Activated naive CD4-positive, alpha-beta T cell treated with anti-CD3 and anti-CD28 coated beads for 36 hours (primary cell): ENCODE measurements at regions of chr12 and their contacts with region 1.

Region 1: DNA sequence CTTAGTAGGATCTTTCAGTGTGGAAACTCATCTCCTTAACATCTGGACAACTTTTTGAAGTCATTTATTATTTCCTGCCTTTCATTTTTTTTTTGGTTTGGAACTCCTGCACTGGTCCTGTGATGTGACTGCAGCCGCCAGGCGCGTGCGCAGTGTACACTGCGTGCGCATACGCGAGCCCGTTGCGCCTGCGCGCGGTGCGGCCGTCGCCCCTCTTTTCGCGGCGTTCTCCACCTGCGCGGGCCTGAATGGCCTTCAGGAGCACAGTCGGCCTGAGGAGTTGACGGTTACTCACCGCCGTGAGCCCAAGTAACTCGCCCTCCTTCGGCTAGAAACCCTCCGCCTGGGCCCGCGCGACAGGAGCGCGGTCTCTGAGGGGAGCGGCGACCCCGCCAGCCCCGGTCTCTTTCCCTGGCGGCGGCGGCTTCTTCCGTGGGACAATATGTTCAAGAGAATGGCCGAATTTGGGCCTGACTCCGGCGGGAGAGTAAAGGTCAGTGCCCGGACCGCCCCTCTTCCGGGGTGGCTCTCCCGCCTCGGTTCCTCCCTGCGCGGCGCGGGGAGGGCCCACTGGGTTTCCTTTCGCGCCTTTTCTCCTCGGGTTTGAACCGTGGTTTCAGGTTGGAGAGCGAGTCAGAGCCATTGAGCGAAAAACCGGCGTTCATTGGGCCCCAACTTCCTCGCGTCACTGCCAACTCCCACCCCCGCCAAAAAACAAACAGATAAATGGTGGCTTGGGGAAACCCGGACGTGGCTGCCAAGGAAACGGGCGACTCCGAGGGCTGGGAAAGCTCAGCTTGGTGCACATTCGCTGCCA is at the start of gene YEATS4:
- DNase-seq: peak; percentile 97
- H3K4me3 Mint-ChIP-seq: peak within 1 kb of the TSS; percentile 71
- H3K27ac Mint-ChIP-seq: peak within 1 kb of the TSS; percentile 89
- H3K4me1 Mint-ChIP-seq: peaks cover 33% of the 10 kb centered on the region
- H3K27me3 Mint-ChIP-seq: no peaks in the 10 kb centered on the region
- total RNA-seq, gene YEATS4: 52.3 to 53.5 TPM

Region 2: GRCh38 chr12:69290545-69291277 is 69.0 kb before region 1 on chr12:
- CTCF ChIA-PET with region 1: interaction called, 18 read pairs
- intact Hi-C with region 1: loop called (anchors 1 kb)
- DNase-seq: peak; percentile 95
- H3K4me3 Mint-ChIP-seq: peak overlapping the region; percentile 5
- H3K27ac Mint-ChIP-seq: no peak overlapping the region
- H3K4me1 Mint-ChIP-seq: peaks cover 10% of the 10 kb centered on the region
- H3K27me3 Mint-ChIP-seq: peaks cover 5% of the 10 kb centered on the region

Region 3: DNA sequence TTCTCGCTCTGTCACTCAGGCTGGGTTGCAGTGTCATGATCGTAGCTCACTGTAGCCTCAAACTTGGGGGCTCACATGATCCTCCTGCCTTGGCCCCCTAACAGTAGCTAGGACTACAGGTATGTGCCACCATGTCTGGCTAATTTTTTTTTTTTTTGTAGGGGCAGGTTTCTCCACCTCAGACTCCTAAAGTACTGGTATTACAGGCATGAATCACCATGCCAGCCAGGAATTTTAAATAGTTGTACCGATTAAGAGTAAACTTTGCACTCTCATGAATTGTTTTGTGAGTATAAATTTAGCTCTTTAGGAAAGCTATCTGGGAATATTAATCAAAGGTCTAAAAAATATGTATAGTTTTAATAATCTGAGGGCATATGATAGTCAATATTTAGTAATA is 25.3 kb after region 1 on chr12:
- CTCF ChIA-PET with region 1: interaction called, 5 read pairs
- intact Hi-C with region 1: loop called (anchors 1 kb)
- DNase-seq: no peak
- H3K4me3 Mint-ChIP-seq: no peak overlapping the region
- H3K27ac Mint-ChIP-seq: no peak overlapping the region
- H3K4me1 Mint-ChIP-seq: peaks cover 14% of the 10 kb centered on the region
- H3K27me3 Mint-ChIP-seq: no peaks in the 10 kb centered on the region

Region 4: DNA sequence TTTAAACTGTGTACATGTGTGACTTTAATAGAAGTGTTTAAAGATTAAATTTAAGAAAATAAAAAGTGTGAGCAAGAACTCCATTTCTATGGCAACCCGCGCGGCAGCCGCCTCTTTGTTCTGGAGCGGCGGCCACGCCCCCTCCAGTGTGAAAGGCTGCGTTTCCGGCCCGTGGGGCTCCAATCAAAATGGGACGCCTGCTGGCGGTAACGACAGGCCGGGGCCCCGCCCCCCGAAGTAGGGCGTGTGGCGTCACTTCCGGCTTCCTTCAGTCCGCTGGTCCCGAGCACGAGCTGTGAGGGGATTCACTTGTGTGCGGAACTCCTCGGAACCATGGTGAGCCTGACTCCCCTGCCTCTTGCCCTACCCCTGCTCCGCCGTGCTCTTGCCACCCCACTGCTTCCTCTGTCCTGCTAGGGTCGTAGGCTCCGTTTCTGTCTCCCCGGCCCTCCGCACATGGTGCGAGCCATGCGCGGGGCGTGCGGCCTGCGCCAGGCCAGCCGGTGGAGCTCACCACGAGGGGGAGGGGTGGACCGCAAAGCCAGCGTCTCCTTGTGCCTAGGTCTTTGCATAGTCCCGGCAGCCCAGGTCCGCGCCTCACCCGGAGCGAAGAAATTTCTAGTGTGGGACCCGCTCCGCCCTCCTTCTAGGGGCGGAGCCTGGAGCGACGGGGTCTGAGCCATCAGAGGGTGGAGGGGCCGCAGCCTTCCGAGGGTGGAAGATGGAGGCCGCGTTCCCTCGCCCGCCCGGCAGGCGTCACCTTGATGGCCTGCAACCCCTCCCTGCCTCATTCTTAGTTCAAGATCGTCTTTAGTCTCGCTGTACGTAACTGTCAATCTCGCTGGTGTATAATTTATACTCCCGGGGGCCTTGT is 225.7 kb after region 1 on chr12 and contains the start of gene CCT2:
- CTCF ChIA-PET with region 1: interaction called, 4 read pairs
- intact Hi-C with region 1: loop called (anchors 1 kb)
- DNase-seq: peak; percentile 97
- H3K4me3 Mint-ChIP-seq: peak within 1 kb of the TSS; percentile 86
- H3K27ac Mint-ChIP-seq: peak within 1 kb of the TSS; percentile 92
- H3K4me1 Mint-ChIP-seq: peaks cover 27% of the 10 kb centered on the region
- H3K27me3 Mint-ChIP-seq: no peaks in the 10 kb centered on the region
- total RNA-seq, gene CCT2: 268 to 280 TPM

Region 5: GRCh38 chr12:69879041-69879960 is 519.6 kb after region 1 on chr12:
- CTCF ChIA-PET with region 1: no interaction called
- intact Hi-C with region 1: loop called (anchors 5 kb)
- DNase-seq: peak; percentile 83
- H3K4me3 Mint-ChIP-seq: no peak overlapping the region
- H3K27ac Mint-ChIP-seq: no peak overlapping the region
- H3K4me1 Mint-ChIP-seq: peaks cover 4% of the 10 kb centered on the region
- H3K27me3 Mint-ChIP-seq: peaks cover 11% of the 10 kb centered on the region

Region 6: DNA sequence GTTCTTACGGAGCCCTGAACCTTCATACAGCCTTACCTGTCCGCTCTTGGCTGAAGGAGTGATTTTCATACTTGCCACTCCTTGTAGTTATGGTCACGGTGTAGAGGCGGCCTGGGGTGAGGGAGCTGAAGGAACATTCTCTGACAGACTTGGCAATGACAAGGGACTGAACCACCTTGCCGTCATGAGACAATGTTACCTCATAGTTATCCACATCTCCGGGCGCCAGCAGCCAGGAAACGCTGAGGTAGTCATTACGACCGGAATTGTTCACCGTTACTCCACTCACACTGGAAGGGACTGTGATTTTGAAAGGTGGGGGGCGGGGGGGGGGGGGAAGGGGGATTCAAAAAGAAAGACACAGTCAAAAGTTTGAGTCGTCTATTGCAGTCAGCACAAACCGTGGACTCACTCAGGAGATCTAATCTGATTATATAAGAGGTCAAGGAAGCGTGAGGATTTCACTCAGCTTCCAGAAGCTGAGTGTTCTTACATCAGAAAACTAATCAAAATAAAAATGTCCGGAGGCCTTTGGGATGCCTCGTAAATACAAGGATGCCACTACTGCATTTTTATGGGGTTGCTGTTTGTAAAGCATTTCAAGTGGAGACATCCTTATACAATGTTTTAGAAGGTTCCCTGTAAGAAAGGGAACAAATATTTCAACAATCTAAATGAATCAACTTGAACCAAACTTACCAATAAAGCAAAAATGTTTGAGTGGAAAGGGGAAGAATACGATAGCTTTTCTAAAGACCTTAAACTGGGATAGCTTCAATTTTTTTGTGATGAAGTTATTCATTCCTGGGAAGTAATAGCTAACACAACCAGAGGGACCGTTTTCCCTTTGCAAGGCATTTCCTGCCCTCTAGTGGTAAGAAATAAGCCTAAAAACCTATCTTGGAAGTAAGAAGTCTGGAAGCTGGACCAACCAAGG is 1216.9 kb after region 1 on chr12:
- CTCF ChIA-PET with region 1: no interaction called
- intact Hi-C with region 1: loop called (anchors 2 kb)
- DNase-seq: no peak
- H3K4me3 Mint-ChIP-seq: no peak overlapping the region
- H3K27ac Mint-ChIP-seq: no peak overlapping the region
- H3K4me1 Mint-ChIP-seq: no peaks in the 10 kb centered on the region
- H3K27me3 Mint-ChIP-seq: peaks cover 7% of the 10 kb centered on the region